ENCODE measurements at regions of chr6 and their contacts with region 1.

Region 1: GRCh38 chr6:2221726-2222274 is 23.6 kb downstream of the GMDS start:
- DNase-seq: no peak

Region 2: DNA sequence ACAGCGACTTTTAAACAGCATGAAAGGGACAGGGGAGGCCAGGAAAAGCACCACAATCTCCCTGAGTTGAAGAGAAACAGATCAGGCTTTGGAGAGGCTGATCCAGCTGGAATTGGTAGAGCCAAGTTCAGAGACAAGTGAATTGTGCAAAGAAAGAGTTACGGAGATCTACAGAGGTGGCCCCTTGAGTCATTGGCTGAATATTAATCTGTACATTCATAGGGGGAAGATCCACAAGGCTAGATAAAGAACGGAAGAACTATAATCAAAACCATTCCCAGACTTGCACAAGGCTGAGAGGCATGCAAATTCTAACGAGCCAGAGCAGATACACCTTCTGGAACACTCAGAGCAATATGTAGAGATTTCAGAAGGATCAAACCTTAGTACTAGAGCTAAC is 924.1 kb before region 1 on chr6:
- intact Hi-C with region 1: no loop called
- DNase-seq: no peak

Region 3: DNA sequence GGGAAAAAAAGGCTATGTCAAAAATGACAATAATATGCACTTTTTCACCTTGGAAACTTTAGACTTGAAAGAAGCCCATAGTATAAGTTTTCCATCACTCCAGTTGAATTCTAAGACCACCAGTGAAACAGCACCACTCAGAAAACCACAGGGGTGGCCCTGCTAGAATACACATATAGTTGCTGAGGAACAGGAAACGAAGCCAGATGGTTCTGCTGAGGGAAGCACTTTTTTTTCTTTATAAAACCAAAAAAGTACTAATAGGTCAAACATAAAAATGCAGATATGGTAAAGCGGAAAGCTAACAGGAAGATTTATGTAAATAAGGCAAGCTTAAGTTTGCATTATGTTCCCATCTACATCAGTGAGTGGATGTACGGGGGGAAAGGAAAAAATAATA is 308.2 kb before region 1 on chr6:
- intact Hi-C with region 1: loop called in 1 of 2 experiments (anchors 2 kb)
- DNase-seq: no peak

Measured in posterior vena cava (tissue), 2 donors.